ENCODE measurements at regions of chr2 and their contacts with region 1.

Region 1: DNA sequence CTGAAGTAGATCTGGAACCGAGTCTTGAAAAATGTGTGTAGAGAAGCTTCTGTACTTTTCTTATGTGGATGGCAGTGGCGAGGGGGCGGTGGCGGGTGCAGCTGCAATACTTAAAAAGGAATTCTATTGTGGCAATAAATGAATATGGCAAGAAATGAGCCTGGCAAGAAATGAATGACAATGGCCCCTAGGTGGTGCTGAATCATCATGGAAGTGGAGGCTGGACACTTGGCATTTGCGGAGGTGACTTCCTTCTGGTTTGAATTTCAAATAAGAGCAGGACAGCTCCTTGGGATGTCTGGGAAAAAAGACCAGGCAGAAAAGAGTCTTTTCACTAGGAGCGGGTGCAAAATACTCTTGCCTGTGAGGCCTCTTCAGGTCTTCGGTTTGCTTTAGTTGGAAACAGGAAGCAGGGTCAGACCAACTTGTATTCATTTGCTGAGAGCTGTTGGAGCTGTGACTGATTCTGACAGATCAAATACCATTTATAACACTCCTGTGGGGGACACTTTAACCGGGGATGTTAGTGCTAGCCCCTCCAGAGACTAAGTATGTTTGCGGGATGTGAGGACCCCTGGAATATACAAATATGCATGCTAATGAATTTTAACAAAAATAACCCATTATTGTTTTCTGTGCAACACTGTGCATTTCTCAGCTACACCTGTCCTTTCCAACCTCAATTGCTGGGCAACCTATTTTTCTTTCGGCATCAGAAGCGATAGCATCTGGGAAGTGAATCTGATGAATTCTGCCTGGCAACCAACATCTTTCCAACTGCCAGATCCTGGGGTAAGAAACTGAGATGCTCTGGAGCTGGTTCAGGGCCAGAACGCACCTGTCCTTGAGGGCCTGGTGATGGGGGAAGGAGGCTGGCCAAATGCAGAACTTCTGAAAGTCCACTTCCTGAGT is 35.4 kb downstream of the FASTKD2 start:
- DNase-seq: peak; percentile 47
- ATAC-seq: peak; percentile 88
- H3K4me3 ChIP-seq: no peak overlapping the region
- H3K27ac ChIP-seq: no peak overlapping the region
- H3K4me1 ChIP-seq: peaks cover 0 to 3% of the 10 kb centered on the region in 2 experiments; a peak in 1 of 4 replicates
- H3K27me3 ChIP-seq: no peaks in the 10 kb centered on the region
- CTCF ChIP-seq: peak; percentile 64 to 77 (median 70)
- POLR2A ChIP-seq: no peak
- RAD21 ChIP-seq: peak; percentile 92

Region 2: DNA sequence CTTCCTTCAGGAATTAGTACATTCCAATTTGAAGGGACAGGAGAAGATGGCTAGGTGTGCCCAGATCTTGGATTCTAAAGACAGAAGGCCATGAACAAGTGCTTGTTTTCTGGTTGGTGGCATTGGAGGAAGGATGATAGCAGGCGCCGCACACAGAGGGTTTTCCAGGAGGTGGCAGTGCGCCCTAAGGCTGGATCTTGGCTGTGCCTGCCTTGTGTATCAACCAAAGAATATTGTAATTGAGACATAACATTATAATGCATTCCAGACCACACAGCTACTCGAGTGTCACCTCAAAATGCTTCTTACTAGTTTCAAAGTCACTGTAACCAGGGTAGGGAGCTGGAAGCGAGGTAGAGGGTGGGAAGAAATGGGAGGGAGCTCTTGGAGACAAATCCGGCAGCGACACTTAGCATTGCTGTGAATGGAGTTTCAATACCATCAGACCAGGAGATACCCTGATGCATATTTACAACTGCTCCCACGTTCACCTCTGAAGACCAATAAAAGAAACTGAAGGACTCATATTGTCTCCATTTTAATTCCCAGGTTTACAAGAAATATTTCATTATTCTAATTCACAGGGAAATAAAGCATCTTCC is 181.1 kb after region 1 on chr2:
- CTCF ChIA-PET with region 1: interaction called, 8 read pairs
- POLR2A ChIA-PET with region 1: no interaction called
- RAD21 ChIA-PET with region 1: no interaction called
- intact Hi-C with region 1: loop called (anchors 2 kb)
- DNase-seq: peak; percentile 36
- ATAC-seq: peak; percentile 91
- H3K4me3 ChIP-seq: no peak overlapping the region
- H3K27ac ChIP-seq: no peak overlapping the region
- H3K4me1 ChIP-seq: no peaks in the 10 kb centered on the region
- H3K27me3 ChIP-seq: no peaks in the 10 kb centered on the region
- CTCF ChIP-seq: peak; percentile 75 to 83 (median 78)
- POLR2A ChIP-seq: no peak
- RAD21 ChIP-seq: peak; percentile 96

Region 3: DNA sequence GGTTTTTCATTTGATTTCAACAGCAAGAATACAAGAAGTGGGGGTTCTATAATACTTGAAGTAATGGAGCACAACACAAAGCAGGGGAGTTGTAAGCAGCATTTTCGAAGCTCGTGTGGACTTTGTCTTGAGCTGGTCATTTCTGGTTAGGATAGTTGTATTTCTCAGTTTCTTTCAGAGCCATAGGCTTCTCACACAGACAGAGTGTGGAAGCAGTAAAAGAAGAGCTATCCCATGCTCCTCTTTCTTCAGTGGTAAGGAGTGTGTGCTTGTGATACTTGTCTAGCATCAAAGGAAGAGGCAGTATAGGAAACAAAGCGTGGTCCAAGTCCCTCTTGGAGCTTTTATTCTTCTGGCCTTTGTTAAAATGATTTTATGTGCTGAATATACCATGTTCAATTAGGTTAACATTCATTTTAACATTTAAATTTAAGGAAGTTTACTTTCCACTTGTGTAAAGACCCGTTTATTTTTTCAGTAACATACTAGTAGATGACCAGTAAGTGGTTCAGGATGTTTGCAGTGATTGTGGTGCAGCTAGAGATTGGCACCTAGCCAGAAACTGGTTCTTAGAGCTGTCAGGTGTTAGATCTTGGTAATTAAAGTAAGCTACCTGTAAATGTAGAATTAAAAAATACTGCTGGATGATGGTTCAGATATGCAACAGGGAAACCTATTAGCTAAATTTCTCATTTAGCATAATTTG is 925.3 kb after region 1 on chr2:
- CTCF ChIA-PET with region 1: no interaction called
- POLR2A ChIA-PET with region 1: no interaction called
- RAD21 ChIA-PET with region 1: no interaction called
- intact Hi-C with region 1: loop called (anchors 10 kb)
- DNase-seq: no peak
- ATAC-seq: no peak
- H3K4me3 ChIP-seq: no peak overlapping the region
- H3K27ac ChIP-seq: no peak overlapping the region
- H3K4me1 ChIP-seq: peaks cover 48 to 60% of the 10 kb centered on the region in 2 experiments
- H3K27me3 ChIP-seq: no peaks in the 10 kb centered on the region
- CTCF ChIP-seq: no peak
- POLR2A ChIP-seq: no peak
- RAD21 ChIP-seq: no peak